Activated naive CD4-positive, alpha-beta T cell treated with anti-CD3 and anti-CD28 coated beads for 36 hours (primary cell): ENCODE measurements at regions of chr16 and their contacts with region 1.

Region 1: GRCh38 chr16:85305996-85306792 is 193.9 kb upstream of the CIBAR2 start:
- DNase-seq: peak; percentile 98
- H3K4me3 Mint-ChIP-seq: peak overlapping the region; percentile 42
- H3K27ac Mint-ChIP-seq: peak overlapping the region; percentile 78
- H3K4me1 Mint-ChIP-seq: peaks cover 66% of the 10 kb centered on the region
- H3K27me3 Mint-ChIP-seq: no peaks in the 10 kb centered on the region

Region 2: DNA sequence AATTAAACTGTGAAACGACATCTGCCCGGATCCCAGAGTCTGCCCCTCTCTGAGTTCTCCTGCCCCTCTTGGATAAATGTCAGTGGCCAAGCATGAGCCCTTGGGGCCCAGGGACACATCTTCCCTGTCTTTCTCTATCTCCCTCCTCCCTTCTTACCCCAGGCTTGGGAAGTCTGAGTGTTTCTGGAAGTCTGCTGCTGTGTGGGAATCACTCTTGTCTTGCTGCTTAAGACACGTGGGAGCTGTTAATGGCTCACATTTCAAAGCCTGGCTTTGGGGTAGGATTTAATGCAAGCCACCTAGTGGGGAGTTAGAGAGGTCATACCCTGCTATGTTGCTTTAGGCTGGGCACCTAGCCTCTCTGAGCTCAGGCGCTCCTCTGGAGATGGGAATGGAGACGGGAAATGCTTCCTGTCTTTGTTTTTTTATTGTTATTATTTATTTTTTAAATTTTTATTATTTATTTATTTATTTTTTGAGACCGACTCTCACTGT is 24.5 kb after region 1 on chr16:
- CTCF ChIA-PET with region 1: interaction called, 17 read pairs
- intact Hi-C with region 1: loop called (anchors 1 kb)
- DNase-seq: peak; percentile 26
- H3K4me3 Mint-ChIP-seq: no peak overlapping the region
- H3K27ac Mint-ChIP-seq: no peak overlapping the region
- H3K4me1 Mint-ChIP-seq: peaks cover 12% of the 10 kb centered on the region
- H3K27me3 Mint-ChIP-seq: peaks cover 4% of the 10 kb centered on the region

Region 3: DNA sequence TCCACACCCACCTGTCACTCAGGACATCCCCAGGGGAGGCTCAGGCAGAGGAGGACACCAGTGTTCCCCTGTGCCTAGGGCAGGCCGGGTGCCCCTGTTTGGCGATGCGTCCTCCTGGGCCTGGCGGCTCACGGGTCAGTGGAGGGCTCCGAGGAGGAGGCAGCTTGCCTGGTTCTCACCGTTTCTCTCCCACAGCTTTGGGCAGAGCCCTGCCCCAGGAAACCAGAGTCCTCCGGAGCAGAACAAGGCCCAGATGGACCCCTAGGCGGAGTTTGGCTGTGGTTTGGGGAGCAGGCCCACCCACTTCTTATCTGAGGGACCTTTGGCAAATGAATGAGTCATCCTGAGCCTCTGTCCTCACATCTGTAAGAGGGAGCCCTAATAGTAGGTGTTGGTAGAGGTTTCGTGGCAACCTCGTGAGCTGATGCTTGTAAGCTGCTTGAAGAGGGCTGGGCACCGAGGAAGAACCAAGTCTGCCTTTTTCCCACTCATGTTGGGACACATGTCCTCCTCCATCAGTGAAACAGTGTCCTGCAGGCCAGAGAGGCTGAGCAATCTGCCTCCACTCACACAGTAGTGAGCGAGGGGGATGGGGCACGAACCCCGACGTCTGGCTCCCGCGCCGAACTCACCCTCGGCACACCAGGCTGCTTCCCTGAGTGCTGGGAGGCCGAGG is 53.1 kb after region 1 on chr16:
- CTCF ChIA-PET with region 1: no interaction called
- intact Hi-C with region 1: no loop called
- DNase-seq: no peak
- H3K4me3 Mint-ChIP-seq: no peak overlapping the region
- H3K27ac Mint-ChIP-seq: no peak overlapping the region
- H3K4me1 Mint-ChIP-seq: no peaks in the 10 kb centered on the region
- H3K27me3 Mint-ChIP-seq: peaks cover 6% of the 10 kb centered on the region

Region 4: DNA sequence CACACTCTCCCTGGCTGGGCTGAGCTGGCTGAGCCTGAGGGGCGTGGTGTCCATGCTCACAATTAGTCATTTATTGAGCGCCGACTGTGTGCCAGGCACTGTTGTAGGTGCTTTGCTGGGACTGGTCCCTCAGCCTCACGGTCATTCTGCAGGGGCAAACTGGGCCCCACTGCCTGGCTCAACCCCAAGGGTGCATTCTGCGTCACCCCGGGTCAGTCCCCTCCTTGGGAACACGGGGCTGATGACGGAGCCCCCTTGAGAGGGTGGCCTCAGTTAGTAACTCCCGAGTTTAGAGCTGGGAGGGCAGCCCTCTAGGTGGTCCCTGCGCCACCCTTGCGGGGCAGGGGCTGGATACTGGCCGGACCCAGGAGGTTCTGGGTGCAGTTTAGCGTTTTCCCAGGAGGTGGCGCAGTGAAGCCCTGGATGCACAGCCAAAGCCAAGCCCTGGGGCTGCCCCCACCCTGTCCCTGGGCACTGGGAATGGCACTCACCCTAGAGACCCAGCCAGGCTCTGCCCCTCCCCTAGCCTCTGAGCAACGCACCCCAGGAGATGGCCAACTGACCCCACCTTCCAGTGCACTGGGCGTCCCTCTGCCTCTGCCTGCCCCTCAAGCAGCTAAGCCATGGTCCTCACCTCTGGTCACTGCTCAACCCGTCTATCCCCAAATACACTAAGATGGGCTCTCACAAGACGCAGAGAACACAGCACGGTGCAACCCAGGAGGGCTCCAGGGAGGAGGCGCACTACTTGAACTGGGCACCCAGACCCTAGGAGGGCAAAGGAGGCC is 63.7 kb after region 1 on chr16:
- CTCF ChIA-PET with region 1: interaction called, 3 read pairs
- intact Hi-C with region 1: loop called (anchors 5 kb)
- DNase-seq: peak; percentile 69
- H3K4me3 Mint-ChIP-seq: no peak overlapping the region
- H3K27ac Mint-ChIP-seq: no peak overlapping the region
- H3K4me1 Mint-ChIP-seq: no peaks in the 10 kb centered on the region
- H3K27me3 Mint-ChIP-seq: no peaks in the 10 kb centered on the region

Region 5: GRCh38 chr16:85420501-85421337 is 114.5 kb after region 1 on chr16:
- CTCF ChIA-PET with region 1: interaction called, 3 read pairs
- intact Hi-C with region 1: loop called (anchors 2 kb)
- DNase-seq: peak; percentile 71
- H3K4me3 Mint-ChIP-seq: no peak overlapping the region
- H3K27ac Mint-ChIP-seq: no peak overlapping the region
- H3K4me1 Mint-ChIP-seq: peaks cover 4% of the 10 kb centered on the region
- H3K27me3 Mint-ChIP-seq: no peaks in the 10 kb centered on the region

Region 6: GRCh38 chr16:85428168-85428898 is 122.1 kb after region 1 on chr16:
- CTCF ChIA-PET with region 1: interaction called, 3 read pairs
- intact Hi-C with region 1: loop called (anchors 2 kb)
- DNase-seq: peak; percentile 64
- H3K4me3 Mint-ChIP-seq: no peak overlapping the region
- H3K27ac Mint-ChIP-seq: no peak overlapping the region
- H3K4me1 Mint-ChIP-seq: no peaks in the 10 kb centered on the region
- H3K27me3 Mint-ChIP-seq: no peaks in the 10 kb centered on the region

Region 7: DNA sequence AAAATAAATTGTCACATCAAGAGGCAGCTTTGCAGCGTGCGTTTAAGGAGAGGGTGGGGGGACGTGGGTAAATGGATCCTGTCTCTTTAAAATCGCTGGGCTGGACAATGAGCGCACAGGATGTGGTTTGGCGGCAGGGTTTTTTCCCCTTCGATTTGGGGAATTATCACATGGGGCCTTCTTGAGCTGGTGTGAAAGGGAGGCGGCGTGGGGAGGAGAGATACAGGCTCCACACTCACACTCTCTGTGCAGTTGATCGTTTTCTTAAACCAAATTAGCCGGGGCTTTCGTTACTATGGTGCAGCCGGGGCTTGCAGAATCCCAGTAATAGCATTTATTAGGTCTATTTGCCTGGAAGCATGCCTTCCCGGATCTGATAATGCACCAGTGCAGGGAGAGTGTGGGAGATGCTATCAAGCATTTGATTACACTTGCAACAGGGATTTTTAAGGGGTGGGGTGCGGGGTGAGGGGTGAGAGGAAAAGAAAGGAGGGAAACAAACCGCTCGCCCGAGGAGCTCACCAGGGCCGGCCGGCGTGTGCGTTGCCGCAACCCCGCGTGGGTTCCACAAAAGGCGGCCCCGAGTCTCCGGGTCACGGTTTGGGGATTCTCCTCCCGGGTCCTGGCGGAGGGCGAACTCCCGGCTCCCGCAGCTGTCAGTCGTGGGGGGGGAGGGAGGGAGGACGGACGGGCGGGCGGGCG is 248.1 kb after region 1 on chr16:
- CTCF ChIA-PET with region 1: no interaction called
- intact Hi-C with region 1: loop called (anchors 2 kb)
- DNase-seq: peak; percentile 93
- H3K4me3 Mint-ChIP-seq: peak overlapping the region; percentile 79
- H3K27ac Mint-ChIP-seq: peak overlapping the region; percentile 93
- H3K4me1 Mint-ChIP-seq: peaks cover 42% of the 10 kb centered on the region
- H3K27me3 Mint-ChIP-seq: no peaks in the 10 kb centered on the region